H1 (cell line): ENCODE measurements at regions of chr10 and their contacts with region 1.

Region 1: GRCh38 chr10:100890673-100891317 is 22.0 kb upstream of the SLF2 start:
- DNase-seq: peak in 1 of 2 experiments; percentile 33
- H3K4me3 ChIP-seq: no peak overlapping the region
- H3K27ac ChIP-seq: no peak overlapping the region
- H3K4me1 ChIP-seq: peaks cover 0 to 8% (median 3%) of the 10 kb centered on the region in 4 experiments; a peak in 3 of 7 replicates
- H3K27me3 ChIP-seq: no peaks in the 10 kb centered on the region
- CTCF ChIP-seq: no peak
- EP300 ChIP-seq: no peak
- POLR2A ChIP-seq: no peak
- RAD21 ChIP-seq: no peak

Region 2: DNA sequence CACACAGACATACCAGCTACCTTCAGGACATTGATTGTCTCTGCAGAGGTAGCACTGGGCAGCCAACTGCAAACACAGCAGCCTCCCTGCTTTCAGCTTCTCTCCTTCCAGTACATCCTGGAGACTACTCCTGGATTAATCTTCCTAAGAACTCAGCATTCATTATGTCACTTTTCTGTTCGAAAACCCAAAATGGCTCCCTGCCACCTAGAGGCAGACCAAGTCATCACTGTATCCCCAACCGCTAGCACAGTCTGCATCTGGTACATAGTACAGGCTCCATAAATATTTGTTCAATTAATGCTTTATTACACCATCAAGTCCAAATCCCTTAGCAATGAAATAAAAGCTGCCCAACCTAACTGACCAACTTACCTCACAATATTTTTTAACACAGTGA is 366.2 kb before region 1 on chr10:
- CTCF ChIA-PET with region 1: no interaction called
- POLR2A ChIA-PET with region 1: no interaction called
- DNase-seq: no peak
- H3K4me3 ChIP-seq: no peak overlapping the region
- H3K27ac ChIP-seq: no peak overlapping the region
- H3K4me1 ChIP-seq: peaks cover 0 to 2% (median 0%) of the 10 kb centered on the region in 4 experiments; a peak in 2 of 7 replicates
- H3K27me3 ChIP-seq: peaks cover 0 to 12% (median 10%) of the 10 kb centered on the region in 4 experiments; a peak in 5 of 7 replicates
- CTCF ChIP-seq: no peak
- EP300 ChIP-seq: no peak
- POLR2A ChIP-seq: no peak
- RAD21 ChIP-seq: no peak

Region 3: GRCh38 chr10:100909501-100910263 is 18.9 kb after region 1 on chr10:
- CTCF ChIA-PET with region 1: interaction called, 12 read pairs
- POLR2A ChIA-PET with region 1: interaction called, 3 read pairs
- DNase-seq: no peak
- H3K4me3 ChIP-seq: no peak overlapping the region
- H3K27ac ChIP-seq: no peak overlapping the region
- H3K4me1 ChIP-seq: peaks cover 2 to 13% (median 4%) of the 10 kb centered on the region in 4 experiments; a peak in 3 of 7 replicates
- H3K27me3 ChIP-seq: no peaks in the 10 kb centered on the region; a peak in 1 of 7 replicates
- CTCF ChIP-seq: no peak
- EP300 ChIP-seq: no peak
- POLR2A ChIP-seq: no peak
- RAD21 ChIP-seq: no peak